Naive thymus-derived CD4-positive, alpha-beta T cell (primary cell): ENCODE measurements at regions of chr1 and their contacts with region 1.

Region 1: GRCh38 chr1:26864610-26865527 is 1.9 kb downstream of the SFN start:
- DNase-seq: peak; percentile 88 to 96 (median 91)
- ATAC-seq: peak; percentile 98
- H3K4me3 ChIP-seq: peak overlapping the region; percentile 97
- H3K4me3 Mint-ChIP-seq: peak overlapping the region; percentile 86 to 100 (median 96)
- H3K27ac ChIP-seq: peak overlapping the region; percentile 78
- H3K27ac Mint-ChIP-seq: peak overlapping the region; percentile 65 to 96 (median 93)
- H3K4me1 ChIP-seq: peaks cover 5 to 10% of the 10 kb centered on the region in 2 donors
- H3K4me1 Mint-ChIP-seq: peaks cover 10 to 33% (median 24%) of the 10 kb centered on the region in 7 donors
- H3K27me3 ChIP-seq: no peaks in the 10 kb centered on the region
- H3K27me3 Mint-ChIP-seq: no peaks in the 10 kb centered on the region

Region 2: DNA sequence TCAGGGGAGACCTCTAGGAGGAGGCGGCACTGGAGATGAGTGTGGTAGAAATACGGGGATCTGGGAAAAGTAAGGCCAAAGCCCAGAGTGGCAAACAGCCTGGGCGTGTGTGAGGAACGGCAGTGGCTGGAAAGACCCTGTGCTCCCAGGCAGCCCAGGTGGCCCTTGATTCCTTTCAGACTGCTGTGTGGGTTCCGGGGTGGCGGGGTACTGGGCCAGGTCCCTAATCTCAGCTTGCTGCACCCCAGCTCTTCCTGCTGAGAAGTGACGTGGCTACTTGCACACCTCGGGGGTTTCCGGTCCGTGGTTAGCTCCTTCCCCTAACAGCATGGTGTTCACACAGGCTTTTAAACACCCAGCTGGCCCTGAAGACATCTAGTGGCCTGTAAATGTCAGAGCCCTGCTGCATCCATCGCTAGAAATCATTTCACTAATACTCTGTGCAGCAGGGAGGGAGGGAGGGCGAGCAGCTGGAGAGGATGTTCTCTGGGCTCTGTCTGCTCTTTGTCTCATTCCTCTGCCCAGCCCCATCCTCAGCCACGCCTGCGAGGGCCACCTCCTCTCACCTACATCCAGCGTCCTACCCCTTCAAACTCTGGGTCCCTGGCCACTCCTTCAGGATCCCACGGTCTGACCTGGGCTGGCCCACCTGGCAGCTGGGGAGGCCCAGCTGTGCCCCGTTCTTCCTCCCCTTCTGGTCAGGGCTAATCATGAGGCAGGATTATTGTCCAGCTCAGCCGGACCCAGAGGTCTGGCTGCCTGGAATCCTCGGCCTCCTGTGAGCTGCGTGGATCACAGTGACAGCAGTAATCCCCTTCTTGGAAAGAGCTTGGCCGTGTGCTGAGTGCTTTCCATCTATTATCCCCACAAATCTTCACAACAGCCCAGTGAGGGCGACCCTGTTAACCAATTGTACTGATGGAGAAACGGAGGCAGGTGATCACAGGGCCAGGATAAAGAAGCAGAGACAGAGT is 31.1 kb before region 1 on chr1:
- CTCF ChIA-PET with region 1: interaction called, 7 read pairs
- POLR2A ChIA-PET with region 1: interaction called, 15 read pairs
- intact Hi-C with region 1: loop called (anchors 1 kb)
- DNase-seq: peak; percentile 59 to 95 (median 88)
- ATAC-seq: peak; percentile 97
- H3K4me3 ChIP-seq: peak overlapping the region; percentile 59
- H3K4me3 Mint-ChIP-seq: peak overlapping the region; percentile 69 to 87 (median 84)
- H3K27ac ChIP-seq: peak overlapping the region; percentile 99
- H3K27ac Mint-ChIP-seq: peak overlapping the region; percentile 95 to 100 (median 99)
- H3K4me1 ChIP-seq: peaks cover 49% of the 10 kb centered on the region in 2 donors
- H3K4me1 Mint-ChIP-seq: peaks cover 50 to 75% (median 64%) of the 10 kb centered on the region in 7 donors
- H3K27me3 ChIP-seq: no peaks in the 10 kb centered on the region
- H3K27me3 Mint-ChIP-seq: no peaks in the 10 kb centered on the region

Region 3: GRCh38 chr1:26874896-26875295 is 10.0 kb after region 1 on chr1:
- CTCF ChIA-PET with region 1: interaction called, 10 read pairs
- POLR2A ChIA-PET with region 1: interaction called, 4 read pairs
- intact Hi-C with region 1: loop called in 1 of 2 experiments (anchors 1 kb)
- DNase-seq: no peak
- ATAC-seq: no peak
- H3K4me3 ChIP-seq: no peak overlapping the region
- H3K4me3 Mint-ChIP-seq: no peak overlapping the region
- H3K27ac ChIP-seq: no peak overlapping the region
- H3K27ac Mint-ChIP-seq: no peak overlapping the region
- H3K4me1 ChIP-seq: no peaks in the 10 kb centered on the region
- H3K4me1 Mint-ChIP-seq: peaks cover 0 to 3% (median 0%) of the 10 kb centered on the region in 7 donors
- H3K27me3 ChIP-seq: no peaks in the 10 kb centered on the region
- H3K27me3 Mint-ChIP-seq: no peaks in the 10 kb centered on the region

Region 4: DNA sequence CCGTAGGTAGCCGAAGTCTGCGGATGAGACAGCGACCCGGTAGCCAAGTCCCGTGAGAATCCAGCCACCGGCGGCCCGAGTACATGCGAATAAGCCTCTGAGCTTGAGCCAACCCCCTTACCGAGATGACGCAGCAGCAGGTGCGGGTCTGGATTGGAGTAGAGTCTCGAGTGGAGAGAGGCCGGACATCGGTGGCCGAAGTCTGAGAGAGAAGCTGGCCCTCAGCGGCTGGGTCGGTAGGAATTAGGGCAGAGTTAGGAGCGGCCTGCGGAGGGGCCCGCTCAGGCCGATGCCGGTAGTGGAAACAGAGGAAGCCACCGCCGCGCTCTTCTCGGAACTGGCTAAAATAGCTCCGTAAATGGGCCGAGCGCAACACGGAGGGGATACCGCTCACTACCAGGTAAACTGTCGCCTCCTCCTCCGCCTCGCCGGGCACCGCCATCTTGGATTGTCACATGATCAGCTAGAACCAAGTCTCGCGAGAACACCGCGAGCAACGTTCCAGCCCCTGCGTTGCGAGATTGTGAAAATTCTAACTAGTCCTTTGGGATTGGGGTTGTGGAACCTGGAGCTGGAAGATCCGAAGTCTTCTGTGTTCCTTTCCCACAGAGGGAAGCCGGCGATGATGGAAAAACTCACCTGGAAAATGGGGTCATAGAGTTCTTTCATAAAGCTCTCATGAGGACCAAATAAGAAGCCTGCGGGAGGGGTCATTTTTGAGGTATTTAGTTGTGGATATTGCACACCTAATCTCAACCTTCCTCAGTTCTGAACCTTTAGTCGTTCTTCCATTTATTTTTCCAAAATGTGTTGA is 35.3 kb after region 1 on chr1 and contains the start of gene GPATCH3:
- CTCF ChIA-PET with region 1: no interaction called
- POLR2A ChIA-PET with region 1: interaction called, 11 read pairs
- intact Hi-C with region 1: no loop called
- DNase-seq: peak; percentile 68 to 89 (median 86)
- ATAC-seq: peak; percentile 93
- H3K4me3 ChIP-seq: peak within 1 kb of the TSS; percentile 94
- H3K4me3 Mint-ChIP-seq: peak within 1 kb of the TSS; percentile 87 to 99 (median 96)
- H3K27ac ChIP-seq: peak within 1 kb of the TSS; percentile 90
- H3K27ac Mint-ChIP-seq: peak within 1 kb of the TSS; percentile 94 to 100 (median 99)
- H3K4me1 ChIP-seq: peaks cover 10 to 16% of the 10 kb centered on the region in 2 donors
- H3K4me1 Mint-ChIP-seq: peaks cover 24 to 46% (median 39%) of the 10 kb centered on the region in 7 donors
- H3K27me3 ChIP-seq: no peaks in the 10 kb centered on the region
- H3K27me3 Mint-ChIP-seq: no peaks in the 10 kb centered on the region
- total RNA-seq, gene GPATCH3: 17.0 to 38.4 (median 22.6) TPM